ENCODE measurements at regions of chr4 and their contacts with region 1.

Region 1: GRCh38 chr4:13654158-13654797 is 26.8 kb upstream of the BOD1L1 start:
- DNase-seq: peak; percentile 70
- H3K4me3 Mint-ChIP-seq: peak overlapping the region; percentile 82
- H3K27ac Mint-ChIP-seq: no peak overlapping the region
- H3K4me1 Mint-ChIP-seq: peaks cover 19% of the 10 kb centered on the region
- H3K27me3 Mint-ChIP-seq: peaks cover 16% of the 10 kb centered on the region

Region 2: GRCh38 chr4:12949719-12950490 is 704.4 kb before region 1 on chr4:
- intact Hi-C with region 1: no loop called
- DNase-seq: no peak
- H3K4me3 Mint-ChIP-seq: no peak overlapping the region
- H3K27ac Mint-ChIP-seq: no peak overlapping the region
- H3K4me1 Mint-ChIP-seq: no peaks in the 10 kb centered on the region
- H3K27me3 Mint-ChIP-seq: no peaks in the 10 kb centered on the region

Region 3: GRCh38 chr4:13611283-13611842 is 42.9 kb before region 1 on chr4:
- intact Hi-C with region 1: no loop called
- DNase-seq: no peak
- H3K4me3 Mint-ChIP-seq: no peak overlapping the region
- H3K27ac Mint-ChIP-seq: no peak overlapping the region
- H3K4me1 Mint-ChIP-seq: peaks cover 35% of the 10 kb centered on the region
- H3K27me3 Mint-ChIP-seq: no peaks in the 10 kb centered on the region

Region 4: DNA sequence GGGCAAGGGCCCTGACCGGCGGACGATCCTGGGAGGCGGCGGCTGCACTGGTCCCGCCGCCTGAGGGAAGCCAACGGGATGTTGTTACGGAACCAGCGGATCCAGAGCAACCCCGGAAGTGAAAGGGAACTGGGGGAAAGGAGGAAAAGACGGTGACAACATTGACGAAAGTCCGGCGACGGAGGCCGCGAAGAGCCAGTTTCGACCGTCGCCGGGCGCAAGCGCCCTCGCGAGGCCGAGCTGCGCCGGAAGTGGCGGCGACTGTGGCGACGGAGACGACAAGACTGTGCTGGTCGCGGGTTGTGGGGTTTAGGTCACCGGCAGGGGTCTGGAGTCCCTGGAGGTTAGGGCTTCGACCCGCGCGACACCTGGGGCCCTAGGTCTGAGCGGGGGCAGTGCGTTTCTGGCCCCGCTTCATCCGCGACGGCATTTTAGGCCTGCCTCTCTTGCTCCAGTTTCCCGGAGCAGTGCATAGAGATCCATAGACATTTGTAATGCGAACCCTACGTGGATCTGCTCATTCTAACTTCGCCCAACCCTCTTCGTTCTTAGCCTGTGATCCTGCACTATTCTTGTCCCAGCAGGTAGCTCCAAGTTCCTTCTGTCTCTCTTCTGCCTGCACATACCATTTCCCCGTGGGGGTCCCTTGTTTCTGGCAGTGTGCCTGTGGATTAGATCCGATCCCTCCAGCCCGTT is 26.5 kb before region 1 on chr4 and contains the start of gene BOD1L1:
- intact Hi-C with region 1: loop called (anchors 1 kb)
- DNase-seq: peak; percentile 81
- H3K4me3 Mint-ChIP-seq: peak within 1 kb of the TSS; percentile 99
- H3K27ac Mint-ChIP-seq: peak within 1 kb of the TSS; percentile 98
- H3K4me1 Mint-ChIP-seq: peaks cover 29% of the 10 kb centered on the region
- H3K27me3 Mint-ChIP-seq: peaks cover 4% of the 10 kb centered on the region
- total RNA-seq, gene BOD1L1: 40.1 and 40.4 TPM in 2 replicates

Region 5: GRCh38 chr4:14787894-14788293 is 1133.6 kb after region 1 on chr4:
- intact Hi-C with region 1: loop called (anchors 5 kb)
- DNase-seq: no peak
- H3K4me3 Mint-ChIP-seq: no peak overlapping the region
- H3K27ac Mint-ChIP-seq: no peak overlapping the region
- H3K4me1 Mint-ChIP-seq: peaks cover 49% of the 10 kb centered on the region
- H3K27me3 Mint-ChIP-seq: no peaks in the 10 kb centered on the region

Region 6: DNA sequence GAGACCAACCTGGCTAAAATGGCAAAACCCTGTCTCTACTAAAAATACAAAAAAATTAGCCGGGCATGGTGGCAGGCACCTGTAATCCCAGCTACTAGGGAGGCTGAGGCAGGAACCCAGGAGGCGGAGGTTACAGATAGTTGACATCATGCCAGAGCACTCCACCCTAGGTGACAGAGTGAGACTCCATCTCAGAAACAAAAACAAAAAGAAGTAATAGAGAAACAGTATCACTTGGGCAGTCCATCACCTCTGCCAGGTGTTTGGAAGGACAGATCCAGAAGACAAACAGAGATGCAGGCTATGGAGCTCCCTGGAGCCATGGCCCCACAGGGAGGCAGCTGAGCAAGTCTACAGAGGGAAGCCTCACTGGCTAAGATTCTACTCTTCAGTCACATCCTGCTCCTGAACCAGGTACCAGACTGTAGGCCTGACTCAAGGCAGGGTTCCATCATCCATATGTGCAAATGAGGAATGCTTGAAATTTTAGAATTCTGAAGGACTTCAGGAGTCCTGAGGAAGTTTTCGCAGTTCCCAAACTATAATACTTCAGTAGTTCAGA is 1266.6 kb after region 1 on chr4:
- intact Hi-C with region 1: loop called (anchors 2 kb)
- DNase-seq: no peak
- H3K4me3 Mint-ChIP-seq: no peak overlapping the region
- H3K27ac Mint-ChIP-seq: no peak overlapping the region
- H3K4me1 Mint-ChIP-seq: no peaks in the 10 kb centered on the region
- H3K27me3 Mint-ChIP-seq: no peaks in the 10 kb centered on the region

Region 7: DNA sequence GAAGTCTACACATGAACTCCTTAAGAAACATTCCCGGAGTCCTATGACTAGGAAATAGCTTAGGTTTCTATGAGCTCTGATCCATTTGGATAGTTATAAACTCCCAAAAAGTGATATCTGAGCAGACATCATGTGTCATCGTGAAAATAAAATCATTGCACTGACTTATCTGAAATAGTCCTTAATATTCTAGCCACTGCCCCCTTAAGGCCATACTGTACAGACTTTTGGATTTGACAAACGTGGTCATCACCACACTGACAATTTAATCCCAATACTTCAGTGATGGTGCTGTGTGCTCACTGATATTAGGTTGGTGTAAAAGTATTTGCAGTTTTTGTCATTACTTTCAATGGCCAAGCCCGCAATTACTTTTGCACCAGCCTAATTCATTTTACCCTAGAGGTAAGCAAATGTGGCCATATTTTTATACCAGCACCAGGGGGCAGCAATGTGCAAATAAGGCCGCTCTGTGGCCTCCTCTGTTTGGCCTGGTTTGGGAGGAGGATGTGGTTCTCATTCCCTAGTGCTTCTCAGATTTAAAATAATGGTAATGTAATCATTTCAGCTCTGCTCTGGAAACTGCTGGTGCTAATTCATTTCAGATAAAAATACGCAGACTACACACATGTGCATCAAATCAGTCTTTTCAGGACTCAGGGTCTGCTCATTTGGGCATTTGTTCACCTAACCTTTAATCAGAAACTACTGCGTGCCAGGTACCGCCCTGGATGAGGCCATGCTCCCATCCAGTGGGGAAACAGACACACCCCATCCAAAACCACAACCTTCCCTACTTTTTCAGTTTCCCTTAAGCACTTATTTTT is 1577.2 kb after region 1 on chr4:
- intact Hi-C with region 1: loop called (anchors 5 kb)
- DNase-seq: peak; percentile 53
- H3K4me3 Mint-ChIP-seq: no peak overlapping the region
- H3K27ac Mint-ChIP-seq: no peak overlapping the region
- H3K4me1 Mint-ChIP-seq: peaks cover 28% of the 10 kb centered on the region
- H3K27me3 Mint-ChIP-seq: no peaks in the 10 kb centered on the region

Region 8: GRCh38 chr4:15649914-15650545 is 1995.8 kb after region 1 on chr4:
- intact Hi-C with region 1: loop called (anchors 1 kb)
- DNase-seq: peak; percentile 60
- H3K4me3 Mint-ChIP-seq: peak overlapping the region; percentile 13
- H3K27ac Mint-ChIP-seq: peak overlapping the region; percentile 42
- H3K4me1 Mint-ChIP-seq: peaks cover 59% of the 10 kb centered on the region
- H3K27me3 Mint-ChIP-seq: no peaks in the 10 kb centered on the region